CD14-positive monocyte (primary cell): ENCODE measurements at regions of chr18 and their contacts with region 1.

Region 1: GRCh38 chr18:40738321-40738880 is 1216.6 kb upstream of the PIK3C3 start:
- DNase-seq: no peak
- H3K4me3 ChIP-seq: no peak overlapping the region
- H3K4me3 Mint-ChIP-seq: no peak overlapping the region
- H3K27ac ChIP-seq: no peak overlapping the region
- H3K27ac Mint-ChIP-seq: no peak overlapping the region
- H3K4me1 ChIP-seq: no peaks in the 10 kb centered on the region
- H3K4me1 Mint-ChIP-seq: no peaks in the 10 kb centered on the region
- H3K27me3 ChIP-seq: no peaks in the 10 kb centered on the region
- H3K27me3 Mint-ChIP-seq: no peaks in the 10 kb centered on the region
- CTCF ChIP-seq: no peak

Region 2: GRCh38 chr18:40006634-40007033 is 731.8 kb before region 1 on chr18:
- intact Hi-C with region 1: no loop called
- DNase-seq: no peak
- H3K4me3 ChIP-seq: no peak overlapping the region
- H3K4me3 Mint-ChIP-seq: no peak overlapping the region
- H3K27ac ChIP-seq: no peak overlapping the region
- H3K27ac Mint-ChIP-seq: no peak overlapping the region
- H3K4me1 ChIP-seq: no peaks in the 10 kb centered on the region
- H3K4me1 Mint-ChIP-seq: no peaks in the 10 kb centered on the region
- H3K27me3 ChIP-seq: no peaks in the 10 kb centered on the region
- H3K27me3 Mint-ChIP-seq: no peaks in the 10 kb centered on the region
- CTCF ChIP-seq: no peak

Region 3: DNA sequence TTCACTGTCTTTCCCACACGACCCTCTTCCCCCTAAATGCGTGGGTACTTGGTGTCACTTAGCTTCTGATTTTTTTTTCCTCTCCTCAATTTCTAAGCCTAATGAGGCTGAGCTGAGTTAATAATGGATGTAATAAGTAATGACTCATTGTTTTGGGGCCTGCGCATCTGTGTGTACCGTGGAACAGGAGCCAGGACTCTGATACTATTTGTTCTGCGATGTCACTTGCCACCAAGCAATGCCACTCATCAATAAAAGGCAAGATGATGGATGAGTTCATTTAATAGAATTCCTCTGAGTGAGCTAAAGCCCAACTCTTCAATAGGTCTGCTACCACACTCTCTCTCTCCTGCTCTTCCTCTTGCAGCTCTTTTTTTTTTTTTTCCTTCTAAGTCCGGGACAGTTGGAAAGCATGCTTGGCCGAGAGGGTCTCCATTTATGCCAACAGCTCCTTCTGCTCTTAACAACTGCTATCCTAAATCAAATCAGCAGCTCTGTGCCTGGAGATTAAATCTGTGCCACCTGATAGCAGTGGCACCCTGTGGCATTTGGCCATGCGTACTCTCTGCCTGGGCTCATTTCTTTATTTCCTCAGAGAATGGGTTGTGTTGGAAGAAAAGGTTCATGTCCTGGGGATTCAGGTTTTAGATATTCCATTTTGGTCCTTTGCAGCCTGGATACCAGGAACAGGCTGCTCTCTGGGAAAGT is 67.6 kb before region 1 on chr18:
- intact Hi-C with region 1: loop called in 1 of 2 experiments (anchors 10 kb)
- DNase-seq: no peak
- H3K4me3 ChIP-seq: no peak overlapping the region
- H3K4me3 Mint-ChIP-seq: no peak overlapping the region
- H3K27ac ChIP-seq: no peak overlapping the region
- H3K27ac Mint-ChIP-seq: no peak overlapping the region
- H3K4me1 ChIP-seq: no peaks in the 10 kb centered on the region
- H3K4me1 Mint-ChIP-seq: no peaks in the 10 kb centered on the region
- H3K27me3 ChIP-seq: no peaks in the 10 kb centered on the region
- H3K27me3 Mint-ChIP-seq: no peaks in the 10 kb centered on the region
- CTCF ChIP-seq: no peak

Region 4: DNA sequence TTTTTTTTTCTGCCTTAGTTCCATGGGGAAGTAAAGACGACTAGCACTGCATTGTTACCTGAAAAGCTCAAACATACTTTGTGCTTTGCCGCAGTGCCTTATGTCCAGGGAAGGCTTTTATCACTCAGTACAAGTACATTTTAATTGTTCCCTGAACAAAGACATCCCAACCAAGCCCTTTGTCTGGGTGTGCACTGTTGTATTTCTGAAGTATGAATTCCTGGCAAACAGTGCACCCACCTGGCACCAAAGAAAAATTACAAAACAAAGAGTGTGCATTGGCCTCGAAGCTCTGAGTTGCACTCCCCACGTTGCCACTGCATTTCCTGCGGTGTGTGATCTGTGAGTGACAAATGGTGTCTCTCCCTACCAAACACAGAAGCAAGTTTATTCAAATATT is 358.1 kb after region 1 on chr18:
- intact Hi-C with region 1: no loop called
- DNase-seq: no peak
- H3K4me3 ChIP-seq: no peak overlapping the region
- H3K4me3 Mint-ChIP-seq: no peak overlapping the region
- H3K27ac ChIP-seq: no peak overlapping the region
- H3K27ac Mint-ChIP-seq: no peak overlapping the region
- H3K4me1 ChIP-seq: no peaks in the 10 kb centered on the region
- H3K4me1 Mint-ChIP-seq: no peaks in the 10 kb centered on the region
- H3K27me3 ChIP-seq: no peaks in the 10 kb centered on the region
- H3K27me3 Mint-ChIP-seq: peaks cover 0 to 2% (median 0%) of the 10 kb centered on the region in 3 donors
- CTCF ChIP-seq: no peak